Calu3 (cell line): ENCODE measurements at regions of chr20 and their contacts with region 1.

Region 1: GRCh38 chr20:52191916-52192718 is 538 bp upstream of the ZFP64 start:
- DNase-seq: peak; percentile 65
- H3K4me3 Mint-ChIP-seq: peak overlapping the region; percentile 97
- H3K27ac Mint-ChIP-seq: peak overlapping the region; percentile 84
- H3K4me1 Mint-ChIP-seq: peaks cover 11% of the 10 kb centered on the region
- H3K27me3 Mint-ChIP-seq: no peaks in the 10 kb centered on the region
- CTCF ChIP-seq: no peak

Region 2: GRCh38 chr20:52230409-52230808 is 38.3 kb after region 1 on chr20:
- CTCF ChIA-PET with region 1: interaction called, 5 read pairs
- intact Hi-C with region 1: loop called (anchors 2 kb)
- DNase-seq: peak; percentile 40
- H3K4me3 Mint-ChIP-seq: peak overlapping the region; percentile 38
- H3K27ac Mint-ChIP-seq: peak overlapping the region; percentile 70
- H3K4me1 Mint-ChIP-seq: peaks cover 24% of the 10 kb centered on the region
- H3K27me3 Mint-ChIP-seq: no peaks in the 10 kb centered on the region
- CTCF ChIP-seq: no peak